HAP-1 (cell line): ENCODE measurements at regions of chr11 and their contacts with region 1.

Region 1: DNA sequence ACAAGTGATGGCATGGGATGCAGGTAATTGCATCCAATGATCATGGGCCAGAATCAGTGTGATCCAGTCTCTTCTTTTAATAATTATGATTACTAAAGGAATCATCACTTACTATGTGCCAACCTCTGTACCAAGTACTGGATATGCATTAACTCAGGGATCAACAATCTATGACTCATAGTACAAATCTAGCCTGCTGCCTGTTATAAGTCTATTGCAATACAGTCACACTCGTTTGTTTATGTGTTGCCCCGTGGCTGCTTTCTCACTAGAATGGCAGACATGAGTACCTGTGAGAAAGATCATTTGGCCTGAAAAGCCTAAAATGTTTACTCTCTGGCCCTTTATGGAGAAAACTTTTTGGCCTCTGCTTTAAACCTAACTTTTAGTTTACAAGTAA is 45.0 kb downstream of the OR6Q1 start:
- DNase-seq: no peak
- H3K4me3 ChIP-seq: no peak overlapping the region
- H3K4me1 ChIP-seq: no peaks in the 10 kb centered on the region
- H3K27me3 ChIP-seq: no peaks in the 10 kb centered on the region

Region 2: GRCh38 chr11:57812634-57813033 is 263.1 kb before region 1 on chr11:
- in situ Hi-C with region 1: no loop called
- DNase-seq: no peak
- H3K4me3 ChIP-seq: no peak overlapping the region
- H3K4me1 ChIP-seq: peaks cover 7% of the 10 kb centered on the region
- H3K27me3 ChIP-seq: no peaks in the 10 kb centered on the region

Region 3: GRCh38 chr11:58179648-58180047 is 103.9 kb after region 1 on chr11:
- in situ Hi-C with region 1: loop called (anchors 25 kb)
- DNase-seq: no peak
- H3K4me3 ChIP-seq: no peak overlapping the region
- H3K4me1 ChIP-seq: no peaks in the 10 kb centered on the region
- H3K27me3 ChIP-seq: 0 out of 2 replicates have a peak, but pooled peaks cover 3% of the 10 kb centered on the region